ENCODE measurements at regions of chr5 and their contacts with region 1.

Region 1: GRCh38 chr5:178058321-178059012 is 54.9 kb upstream of the N4BP3 start:
- DNase-seq: no peak
- H3K4me3 ChIP-seq: no peak overlapping the region
- H3K27ac ChIP-seq: no peak overlapping the region
- H3K4me1 ChIP-seq: no peaks in the 10 kb centered on the region
- H3K27me3 ChIP-seq: no peaks in the 10 kb centered on the region
- CTCF ChIP-seq: no peak
- EP300 ChIP-seq: no peak
- POLR2A ChIP-seq: no peak
- RAD21 ChIP-seq: no peak

Region 2: GRCh38 chr5:177982072-177982727 is 76.3 kb before region 1 on chr5:
- CTCF ChIA-PET with region 1: interaction called, 31 read pairs
- POLR2A ChIA-PET with region 1: interaction called, 5 read pairs
- DNase-seq: peak; percentile 44 to 85
- H3K4me3 ChIP-seq: no peak overlapping the region
- H3K27ac ChIP-seq: no peak overlapping the region
- H3K4me1 ChIP-seq: peaks cover 0 to 10% (median 6%) of the 10 kb centered on the region in 4 experiments; a peak in 3 of 7 replicates
- H3K27me3 ChIP-seq: peaks cover 4 to 43% (median 26%) of the 10 kb centered on the region in 4 experiments; a peak in 6 of 7 replicates
- CTCF ChIP-seq: peak in 2 of 3 experiments; percentile 87 to 98; a peak in 3 of 4 replicates
- EP300 ChIP-seq: no peak
- POLR2A ChIP-seq: no peak
- RAD21 ChIP-seq: peak; percentile 93 to 96

Region 3: GRCh38 chr5:177994561-177995190 is 63.8 kb before region 1 on chr5:
- CTCF ChIA-PET with region 1: interaction called, 10 read pairs
- POLR2A ChIA-PET with region 1: no interaction called
- DNase-seq: no peak
- H3K4me3 ChIP-seq: no peak overlapping the region
- H3K27ac ChIP-seq: no peak overlapping the region
- H3K4me1 ChIP-seq: peaks cover 0 to 10% (median 5%) of the 10 kb centered on the region in 4 experiments; a peak in 6 of 7 replicates
- H3K27me3 ChIP-seq: no peaks in the 10 kb centered on the region; a peak in 1 of 7 replicates
- CTCF ChIP-seq: no peak
- EP300 ChIP-seq: no peak
- POLR2A ChIP-seq: no peak
- RAD21 ChIP-seq: no peak

Region 4: DNA sequence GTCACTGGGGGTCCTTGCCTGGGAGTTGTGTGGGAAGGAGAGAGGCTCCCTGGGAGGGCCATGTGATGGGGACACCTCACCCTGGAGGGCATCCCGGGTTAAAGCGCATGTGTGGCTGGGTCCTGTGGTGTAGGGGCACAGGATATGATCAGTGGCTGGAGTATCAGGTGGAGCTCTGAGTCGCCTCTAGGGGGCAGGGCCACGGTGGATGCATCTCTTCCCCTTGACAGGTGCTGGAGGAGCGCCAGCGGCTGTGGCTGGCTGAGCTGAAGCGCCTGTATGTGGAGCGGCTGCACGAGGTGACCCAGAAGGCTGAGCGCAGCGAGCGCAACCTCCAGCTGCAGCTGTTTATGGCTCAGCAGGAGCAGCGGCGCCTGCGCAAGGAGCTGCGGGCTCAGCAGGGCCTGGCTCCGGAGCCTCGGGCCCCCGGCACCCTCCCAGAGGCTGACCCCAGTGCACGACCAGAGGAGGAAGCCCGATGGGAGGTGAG is 62.4 kb after region 1 on chr5:
- CTCF ChIA-PET with region 1: no interaction called
- POLR2A ChIA-PET with region 1: no interaction called
- DNase-seq: peak; percentile 41 to 77
- H3K4me3 ChIP-seq: no peak overlapping the region
- H3K27ac ChIP-seq: no peak overlapping the region; the same call in 1 of the 2 replicates
- H3K4me1 ChIP-seq: peaks cover 11 to 64% (median 37%) of the 10 kb centered on the region in 4 experiments
- H3K27me3 ChIP-seq: no peaks in the 10 kb centered on the region
- CTCF ChIP-seq: peak in 2 of 3 experiments; percentile 74 to 88; a peak in 3 of 4 replicates
- EP300 ChIP-seq: no peak
- POLR2A ChIP-seq: no peak; a peak in 1 of 3 replicates
- RAD21 ChIP-seq: peak; percentile 38 to 61

Region 5: DNA sequence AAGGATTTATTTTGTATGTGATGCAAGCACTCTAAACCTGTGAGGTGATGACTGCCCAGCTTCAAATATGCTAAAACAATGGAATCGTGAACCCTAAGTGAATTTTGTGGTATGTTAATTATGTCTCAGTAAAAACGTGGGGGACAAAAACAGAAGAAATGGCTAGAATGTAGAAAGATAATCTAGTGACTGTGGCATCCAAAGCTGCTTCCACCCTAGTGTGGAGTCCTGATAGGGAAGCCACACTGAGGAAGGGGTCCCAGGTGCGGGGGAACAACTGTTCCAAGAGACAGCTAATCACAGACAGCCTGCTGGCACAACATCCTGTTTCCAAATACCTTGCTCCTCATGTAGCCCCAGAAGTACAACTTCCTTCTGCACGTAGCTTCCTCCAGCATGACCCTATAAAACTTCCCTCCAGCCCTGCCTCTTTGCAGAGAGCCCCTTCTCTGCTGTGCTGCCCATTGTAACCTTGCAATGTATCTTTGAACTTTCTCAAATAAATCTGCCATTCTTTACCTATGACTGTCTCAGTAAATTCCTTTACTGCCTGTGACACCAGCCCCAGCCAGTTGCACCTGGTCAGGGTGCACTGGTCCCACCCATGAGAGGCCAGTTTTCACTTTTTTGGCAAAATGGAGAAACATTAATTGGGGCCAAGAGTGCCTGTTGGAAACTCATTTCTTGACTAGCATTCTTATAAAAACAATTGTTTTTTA is 123.8 kb after region 1 on chr5:
- CTCF ChIA-PET with region 1: no interaction called
- POLR2A ChIA-PET with region 1: no interaction called
- DNase-seq: no peak
- H3K4me3 ChIP-seq: no peak overlapping the region
- H3K27ac ChIP-seq: peak overlapping the region; percentile 15; the same call in 1 of the 2 replicates
- H3K4me1 ChIP-seq: peaks cover 2 to 25% (median 16%) of the 10 kb centered on the region in 4 experiments; a peak in 6 of 7 replicates
- H3K27me3 ChIP-seq: no peaks in the 10 kb centered on the region
- CTCF ChIP-seq: no peak
- EP300 ChIP-seq: no peak
- POLR2A ChIP-seq: no peak
- RAD21 ChIP-seq: no peak

Measured in H1 (cell line).